ENCODE measurements at regions of chr1 and their contacts with region 1.

Region 1: GRCh38 chr1:25347556-25347955 is 9.4 kb downstream of the TMEM50A start:
- H3K4me3 ChIP-seq: no peak overlapping the region
- H3K27ac ChIP-seq: no peak overlapping the region
- H3K4me1 ChIP-seq: no peaks in the 10 kb centered on the region
- CTCF ChIP-seq: no peak

Region 2: DNA sequence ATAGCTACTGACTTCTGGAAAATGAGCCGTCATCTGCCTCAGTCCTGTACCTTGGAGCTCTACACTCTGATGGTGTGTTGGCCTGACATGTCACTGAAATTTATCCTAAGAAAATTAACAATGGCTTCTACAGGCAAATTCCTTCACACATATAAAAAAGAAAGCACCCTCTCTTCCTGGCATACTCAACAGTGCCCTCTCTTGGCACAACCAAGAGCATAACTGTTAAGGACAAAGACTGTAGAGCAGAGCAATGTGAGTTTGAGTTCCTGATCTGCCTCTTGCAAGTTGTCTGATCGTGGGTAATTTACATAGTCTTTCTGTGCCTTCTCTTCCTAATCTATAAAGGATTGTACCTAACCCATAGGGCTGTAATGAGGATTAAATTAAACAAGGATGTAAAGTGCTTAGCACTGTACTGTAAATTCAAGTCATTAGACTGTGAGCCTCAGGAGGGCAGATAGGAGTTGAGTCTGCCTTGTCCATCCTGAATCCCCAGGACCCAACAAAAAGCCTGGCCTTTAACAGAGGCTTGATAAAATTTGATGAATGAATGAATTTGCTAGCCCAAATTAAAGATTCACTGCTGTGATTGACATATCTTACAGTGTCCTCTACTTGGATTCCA is 198.8 kb before region 1 on chr1:
- CTCF ChIA-PET with region 1: no interaction called
- POLR2A ChIA-PET with region 1: no interaction called
- H3K4me3 ChIP-seq: no peak overlapping the region
- H3K27ac ChIP-seq: no peak overlapping the region
- H3K4me1 ChIP-seq: no peaks in the 10 kb centered on the region
- CTCF ChIP-seq: no peak

Region 3: DNA sequence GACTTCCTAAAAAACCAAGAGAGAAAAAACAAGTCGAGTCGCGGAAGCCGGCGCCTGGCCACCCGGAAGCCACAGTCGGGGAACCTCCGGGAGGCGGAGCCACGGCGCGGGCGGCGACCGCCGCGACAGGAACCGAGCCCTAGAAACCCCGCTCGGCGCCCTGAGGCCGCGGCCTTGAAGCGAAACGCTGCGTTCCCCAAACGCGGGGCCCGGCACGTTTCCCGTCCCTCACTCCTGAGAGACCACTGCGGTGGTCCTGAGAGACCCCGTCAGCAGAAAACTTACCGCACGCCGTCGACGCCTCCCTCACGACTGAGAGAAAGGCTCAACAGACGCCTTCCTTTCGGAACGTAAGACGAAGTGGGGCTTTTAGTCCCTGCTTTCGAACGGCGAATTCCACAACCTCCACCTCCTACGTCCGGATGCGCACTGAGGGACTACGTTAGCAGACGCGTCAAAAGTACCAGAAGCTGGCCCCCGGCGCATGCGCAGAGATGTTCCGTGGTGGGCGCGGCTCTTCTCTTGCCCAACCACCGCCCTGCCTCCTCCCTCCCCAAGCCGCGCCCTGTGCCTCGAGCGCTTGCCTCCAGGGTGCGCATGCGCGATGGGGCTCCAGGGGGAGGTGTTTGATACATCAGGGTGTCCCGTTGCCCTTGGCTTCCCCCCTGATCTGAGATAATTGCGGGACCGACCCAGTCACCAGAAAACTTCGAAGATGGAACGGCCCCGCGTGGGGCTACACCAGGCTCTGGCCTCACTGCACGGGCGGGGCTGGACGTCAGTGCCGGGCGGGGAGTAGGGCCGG is 100.3 kb before region 1 on chr1 and contains the start of gene RSRP1:
- CTCF ChIA-PET with region 1: no interaction called
- POLR2A ChIA-PET with region 1: interaction called, 10 read pairs
- H3K4me3 ChIP-seq: peak within 1 kb of the TSS; percentile 99
- H3K27ac ChIP-seq: peak within 1 kb of the TSS; percentile 96
- H3K4me1 ChIP-seq: 0 out of 2 replicates have a peak, but pooled peaks cover 2% of the 10 kb centered on the region
- CTCF ChIP-seq: no peak